ENCODE measurements at regions of chr9 and their contacts with region 1.

Region 1: GRCh38 chr9:77433675-77434445 is 214.3 kb downstream of the GNA14 start:
- DNase-seq: no peak
- H3K4me3 ChIP-seq: no peak overlapping the region
- H3K27ac ChIP-seq: no peak overlapping the region
- H3K27me3 ChIP-seq: no peaks in the 10 kb centered on the region
- CTCF ChIP-seq: peak; percentile 100

Region 2: DNA sequence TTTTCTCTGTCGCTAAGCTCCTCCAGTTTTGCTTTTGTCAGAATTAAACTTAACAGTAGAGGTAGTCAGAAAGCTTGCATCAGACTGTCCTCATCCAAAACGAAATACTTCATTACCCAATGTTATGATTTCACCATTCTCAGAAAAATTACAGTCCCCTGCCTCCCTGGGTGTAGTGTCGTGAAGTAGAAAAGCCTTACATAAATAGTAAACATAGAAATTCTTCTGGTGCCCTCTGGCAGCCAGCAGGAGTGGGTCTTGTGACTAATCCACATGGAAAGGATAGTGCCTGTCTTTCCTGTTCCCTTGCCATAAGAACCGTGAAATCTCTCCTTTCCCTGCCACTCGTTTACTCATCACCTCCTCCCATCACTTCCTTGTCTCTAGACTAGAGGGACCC is 16.3 kb before region 1 on chr9:
- CTCF ChIA-PET with region 1: interaction called, 43 read pairs
- POLR2A ChIA-PET with region 1: no interaction called
- DNase-seq: peak; percentile 43
- H3K4me3 ChIP-seq: no peak overlapping the region
- H3K27ac ChIP-seq: peak overlapping the region; percentile 54
- H3K27me3 ChIP-seq: no peaks in the 10 kb centered on the region
- CTCF ChIP-seq: no peak

Region 3: DNA sequence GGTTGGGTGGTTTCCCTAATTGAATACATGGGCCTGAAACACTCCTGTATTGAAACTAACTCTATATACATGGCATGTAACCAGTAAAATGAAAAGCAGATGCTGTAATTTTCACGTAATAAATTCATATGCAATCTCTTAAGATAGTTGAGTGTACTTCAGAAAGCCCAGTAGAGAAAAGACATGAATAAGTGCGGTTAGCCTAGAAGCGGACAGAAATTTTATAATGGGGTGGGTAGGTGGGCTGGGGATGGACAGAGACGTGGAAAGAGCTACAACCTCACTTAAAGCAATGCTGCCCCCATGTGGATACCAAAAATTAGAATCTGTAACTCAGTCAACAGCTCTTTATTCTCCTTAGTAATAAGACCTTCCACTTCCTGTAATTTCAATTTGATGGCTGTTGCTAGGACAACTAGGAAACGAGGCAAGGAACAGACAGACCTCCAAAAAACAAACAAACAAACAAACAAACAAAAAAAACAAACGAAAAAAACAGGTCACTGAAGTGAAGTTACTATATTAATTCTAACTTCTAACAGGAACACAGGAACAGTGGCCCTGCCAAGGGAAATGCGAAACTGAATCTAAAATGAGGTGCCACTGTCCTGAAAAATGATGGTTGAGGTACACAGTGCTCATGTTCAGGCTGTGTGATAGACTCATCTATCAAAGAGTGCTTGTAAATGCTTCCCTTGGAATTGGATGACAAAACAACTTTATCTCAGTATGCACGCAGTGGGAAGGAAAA is 317.7 kb after region 1 on chr9:
- CTCF ChIA-PET with region 1: interaction called, 56 read pairs
- POLR2A ChIA-PET with region 1: interaction called, 7 read pairs
- DNase-seq: peak; percentile 26
- H3K4me3 ChIP-seq: no peak overlapping the region
- H3K27ac ChIP-seq: no peak overlapping the region
- H3K27me3 ChIP-seq: no peaks in the 10 kb centered on the region
- CTCF ChIP-seq: peak; percentile 63

Region 4: DNA sequence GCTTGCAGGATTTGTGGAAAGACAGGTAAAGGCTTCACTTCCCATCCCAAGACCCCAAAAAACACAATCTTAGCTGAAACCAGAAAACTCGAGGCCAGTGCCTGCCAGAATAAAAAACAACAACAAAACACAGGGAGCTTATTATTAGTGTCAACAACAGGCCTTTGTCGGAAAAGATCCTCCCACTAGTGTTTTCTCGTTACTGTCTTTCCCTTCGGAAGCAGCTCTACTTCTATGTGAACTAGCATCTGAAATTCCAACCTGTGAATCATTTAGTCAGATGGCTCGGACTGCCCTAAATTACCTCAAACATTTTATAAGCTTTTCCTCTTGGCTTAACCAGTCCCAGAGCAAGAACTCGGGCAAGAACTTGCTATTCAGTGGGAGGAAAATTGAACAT is 336.5 kb after region 1 on chr9:
- CTCF ChIA-PET with region 1: interaction called, 27 read pairs
- POLR2A ChIA-PET with region 1: no interaction called
- DNase-seq: no peak
- H3K4me3 ChIP-seq: no peak overlapping the region
- H3K27ac ChIP-seq: no peak overlapping the region
- H3K27me3 ChIP-seq: no peaks in the 10 kb centered on the region
- CTCF ChIP-seq: no peak

Measured in AG04450 (cell line).